ENCODE measurements at regions of chr1 and their contacts with region 1.

Region 1: DNA sequence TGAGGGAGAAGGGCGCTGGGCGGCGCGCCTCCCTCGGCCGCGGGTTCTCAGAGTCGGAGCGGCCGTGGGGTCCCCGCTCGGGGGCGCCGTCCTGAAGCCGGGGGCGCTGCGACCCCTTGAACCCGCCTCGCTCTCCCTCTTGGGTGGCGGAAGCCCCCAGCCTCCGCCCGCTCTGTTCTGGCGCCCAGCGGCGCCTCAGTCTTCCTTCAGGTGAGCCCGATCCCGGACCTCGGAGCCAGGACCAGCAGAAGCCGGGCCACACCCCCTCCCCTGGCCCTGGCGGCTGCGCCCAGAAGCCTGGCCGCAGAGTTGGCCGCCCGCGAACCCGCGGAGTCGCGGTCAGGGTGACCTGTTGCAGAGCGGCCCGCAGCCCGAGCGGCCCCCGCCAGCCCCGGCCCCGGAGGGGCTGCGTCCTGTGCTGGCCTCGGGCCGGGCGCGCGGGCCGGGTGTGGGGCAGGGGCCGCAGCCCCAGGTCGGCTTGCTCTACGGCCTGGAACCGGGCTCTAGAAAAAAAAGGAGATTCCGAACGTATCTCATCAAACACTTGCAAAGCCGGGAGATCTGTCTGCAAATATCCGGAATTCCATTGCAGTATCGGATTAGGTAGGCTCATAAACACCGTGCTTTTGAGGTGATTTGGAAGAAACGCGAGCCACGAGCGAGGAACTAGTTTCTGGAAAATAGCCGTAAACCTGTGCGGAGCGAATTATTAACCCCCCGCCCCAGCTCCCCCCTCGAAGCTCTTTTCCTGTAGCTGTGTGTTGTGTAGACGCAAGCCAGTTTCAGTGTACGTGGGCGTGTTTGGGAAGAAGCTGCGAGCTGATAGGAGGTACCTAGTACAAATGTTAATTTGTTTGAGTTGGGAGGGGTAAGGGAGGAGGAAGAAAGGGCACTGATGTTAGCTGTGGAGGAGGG is 816 bp downstream of the RALGPS2 start:
- DNase-seq: peak; percentile 53
- ATAC-seq: peak; percentile 74
- H3K4me3 Mint-ChIP-seq: peak overlapping the region; percentile 92
- H3K27ac Mint-ChIP-seq: peak overlapping the region; percentile 96
- H3K4me1 Mint-ChIP-seq: peaks cover 55% of the 10 kb centered on the region
- H3K27me3 Mint-ChIP-seq: no peaks in the 10 kb centered on the region
- CTCF ChIP-seq: no peak

Region 2: DNA sequence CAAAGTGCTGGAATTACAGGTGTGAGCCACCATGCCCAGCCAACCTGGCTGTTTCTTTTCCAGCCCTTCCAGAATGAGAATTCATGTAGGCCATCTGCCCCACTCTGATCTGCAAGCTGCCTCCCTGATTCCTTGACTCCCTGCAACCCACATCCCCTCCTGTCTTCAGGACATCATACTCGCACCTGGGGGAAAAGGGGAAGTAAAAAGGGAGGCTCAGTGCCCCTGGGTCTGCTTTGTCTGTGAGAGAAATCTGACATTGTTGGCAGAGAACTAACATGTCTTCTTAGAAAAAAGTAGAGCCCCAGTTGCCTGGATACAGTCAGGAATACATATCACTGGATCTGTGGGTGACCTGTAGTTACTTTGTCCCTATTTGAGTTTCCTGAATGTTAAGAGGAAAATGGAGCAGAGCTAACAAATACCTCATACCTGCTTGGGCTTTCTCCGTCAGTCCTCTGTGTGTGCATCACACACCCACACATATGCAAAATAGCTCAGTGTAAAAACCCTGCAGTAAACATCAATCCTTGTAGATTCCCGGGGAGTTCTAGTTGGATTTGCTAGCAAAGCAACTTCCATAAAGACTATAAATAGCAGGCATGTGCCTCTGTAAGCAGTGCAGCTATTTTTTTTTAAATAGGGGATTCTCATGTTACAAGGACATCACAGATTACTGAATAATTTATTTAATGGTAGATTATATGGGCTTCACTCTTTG is 150.1 kb before region 1 on chr1:
- CTCF ChIA-PET with region 1: interaction called, 10 read pairs
- POLR2A ChIA-PET with region 1: interaction called, 100 read pairs
- intact Hi-C with region 1: no loop called
- DNase-seq: no peak
- ATAC-seq: peak; percentile 36
- H3K4me3 Mint-ChIP-seq: peak overlapping the region; percentile 65
- H3K27ac Mint-ChIP-seq: peak overlapping the region; percentile 98
- H3K4me1 Mint-ChIP-seq: peaks cover 83% of the 10 kb centered on the region
- H3K27me3 Mint-ChIP-seq: no peaks in the 10 kb centered on the region
- CTCF ChIP-seq: no peak

Region 3: DNA sequence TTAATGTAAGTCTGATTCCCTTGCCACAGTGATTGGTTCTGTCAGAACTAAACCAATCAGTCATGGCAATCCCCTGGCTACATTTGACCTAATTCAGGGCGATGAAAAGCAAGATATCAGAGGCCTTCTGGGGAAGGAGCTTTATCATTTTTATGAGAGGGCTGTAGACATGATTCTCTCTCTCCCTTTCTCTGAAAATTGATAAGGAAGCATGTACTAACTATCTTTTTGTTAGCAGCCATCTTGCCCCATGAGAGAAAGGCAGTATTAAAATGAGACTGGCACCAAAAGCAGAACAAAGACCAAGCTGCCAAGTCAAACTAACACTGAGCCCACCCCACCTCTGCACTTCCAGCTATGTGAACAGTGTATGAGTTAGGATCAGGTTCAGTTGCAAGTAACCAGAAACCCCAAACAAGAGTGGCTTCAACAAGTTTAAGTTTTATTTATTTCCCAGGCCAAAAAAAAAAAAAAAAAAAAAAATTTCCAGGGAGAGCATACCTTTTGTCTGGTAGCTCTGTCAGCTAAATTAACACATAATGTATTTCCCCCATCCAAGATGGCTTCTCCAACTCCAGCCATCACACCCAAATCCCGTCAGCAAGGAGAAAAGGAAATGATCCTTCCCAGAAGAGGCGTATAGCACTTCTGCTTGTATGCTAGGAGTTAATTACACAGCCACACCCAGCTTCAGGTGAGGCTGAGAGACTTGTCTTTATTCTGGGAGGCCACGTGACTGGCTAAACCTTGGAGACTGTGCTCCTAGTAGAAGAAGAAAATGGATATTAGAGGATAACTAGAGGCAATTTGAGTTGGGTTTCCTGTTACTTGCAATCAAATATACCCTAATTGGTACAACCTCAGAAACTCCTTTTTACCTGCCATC is 106.6 kb before region 1 on chr1:
- CTCF ChIA-PET with region 1: no interaction called
- POLR2A ChIA-PET with region 1: interaction called, 16 read pairs
- intact Hi-C with region 1: no loop called
- DNase-seq: no peak
- ATAC-seq: peak; percentile 98
- H3K4me3 Mint-ChIP-seq: peak overlapping the region; percentile 67
- H3K27ac Mint-ChIP-seq: peak overlapping the region; percentile 91
- H3K4me1 Mint-ChIP-seq: peaks cover 58% of the 10 kb centered on the region
- H3K27me3 Mint-ChIP-seq: no peaks in the 10 kb centered on the region
- CTCF ChIP-seq: no peak

Region 4: DNA sequence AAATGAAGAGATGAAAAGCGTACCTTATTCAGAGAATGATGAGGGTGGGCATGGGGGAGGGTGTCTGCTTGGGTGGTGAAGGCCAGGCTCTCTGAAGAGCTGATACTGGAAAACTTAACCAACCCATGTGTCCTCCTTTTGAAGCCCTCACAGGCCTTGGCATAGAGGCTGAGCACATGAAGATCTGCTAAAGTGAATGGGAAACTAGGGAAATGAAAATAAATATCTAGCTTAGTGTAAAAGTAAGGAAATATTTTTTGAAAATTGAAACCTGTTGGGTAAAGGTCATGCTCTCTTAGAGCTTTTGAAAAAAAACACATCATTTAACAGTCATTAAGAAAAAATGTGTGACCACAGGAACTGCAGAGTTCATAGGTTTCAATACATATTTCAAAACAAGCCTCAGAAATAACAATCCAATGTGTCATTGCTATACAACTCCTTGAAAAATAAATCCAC is 41.3 kb before region 1 on chr1:
- CTCF ChIA-PET with region 1: no interaction called
- POLR2A ChIA-PET with region 1: interaction called, 10 read pairs
- intact Hi-C with region 1: no loop called
- DNase-seq: no peak
- ATAC-seq: peak; percentile 50
- H3K4me3 Mint-ChIP-seq: peak overlapping the region; percentile 32
- H3K27ac Mint-ChIP-seq: peak overlapping the region; percentile 61
- H3K4me1 Mint-ChIP-seq: peaks cover 52% of the 10 kb centered on the region
- H3K27me3 Mint-ChIP-seq: no peaks in the 10 kb centered on the region
- CTCF ChIP-seq: no peak

Region 5: DNA sequence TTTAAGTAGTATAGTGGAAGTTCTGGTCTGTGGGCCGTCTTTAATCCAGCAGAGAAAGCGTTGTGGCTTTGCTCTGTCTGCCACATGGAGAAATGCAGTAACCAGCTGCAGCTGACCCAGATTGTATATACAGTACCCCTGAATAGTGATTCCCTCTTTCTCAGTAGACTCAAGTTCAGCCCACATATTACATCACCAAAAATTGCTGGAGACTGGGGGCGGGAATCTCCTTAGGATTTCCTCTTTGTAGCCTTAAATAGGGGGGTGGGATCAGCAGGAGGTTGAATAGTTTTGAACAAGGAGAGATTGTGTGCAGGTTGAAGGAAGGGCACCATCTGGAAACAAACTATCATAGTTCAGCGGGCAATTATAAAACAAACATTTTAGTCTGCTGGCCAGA is 145.1 kb after region 1 on chr1 and contains the start of gene ANGPTL1:
- CTCF ChIA-PET with region 1: no interaction called
- POLR2A ChIA-PET with region 1: interaction called, 3 read pairs
- intact Hi-C with region 1: loop called (anchors 5 kb)
- DNase-seq: no peak
- ATAC-seq: no peak
- H3K4me3 Mint-ChIP-seq: no peak within 1 kb of the TSS
- H3K27ac Mint-ChIP-seq: peak within 1 kb of the TSS; percentile 77
- H3K4me1 Mint-ChIP-seq: peaks cover 39% of the 10 kb centered on the region
- H3K27me3 Mint-ChIP-seq: no peaks in the 10 kb centered on the region
- CTCF ChIP-seq: no peak
- total RNA-seq, gene ANGPTL1: not detected in 2 replicates

Region 6: DNA sequence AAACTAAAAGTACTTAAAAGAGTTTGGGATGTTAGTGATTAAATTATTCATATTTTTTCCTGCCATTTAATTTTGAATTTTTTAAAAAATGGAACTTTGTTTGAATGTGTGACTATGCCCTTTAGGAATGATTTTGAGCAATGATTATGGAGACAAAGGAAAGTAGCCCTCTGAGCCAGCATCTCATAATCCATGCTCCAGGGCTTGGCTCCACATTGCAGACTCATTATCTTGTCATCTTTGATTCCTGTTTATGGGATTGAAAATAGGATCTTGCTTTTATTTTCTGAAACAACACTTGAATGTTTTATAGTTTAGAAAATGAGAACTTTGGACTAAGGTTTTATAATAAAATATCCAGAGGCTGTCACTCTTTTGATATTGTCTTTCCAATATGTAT is 654.4 kb after region 1 on chr1:
- CTCF ChIA-PET with region 1: no interaction called
- POLR2A ChIA-PET with region 1: no interaction called
- intact Hi-C with region 1: no loop called
- DNase-seq: no peak
- ATAC-seq: no peak
- H3K4me3 Mint-ChIP-seq: no peak overlapping the region
- H3K27ac Mint-ChIP-seq: no peak overlapping the region
- H3K4me1 Mint-ChIP-seq: no peaks in the 10 kb centered on the region
- H3K27me3 Mint-ChIP-seq: peaks cover 2% of the 10 kb centered on the region
- CTCF ChIP-seq: no peak

Measured in activated B cell treated with CpG ODN at 0.5 μM for 24 hours (primary cell).